ENCODE measurements at regions of chr11 and their contacts with region 1.

Region 1: GRCh38 chr11:34585735-34586487 is 35.0 kb upstream of the EHF start:
- DNase-seq: no peak
- ATAC-seq: peak; percentile 64
- H3K4me3 ChIP-seq: peak overlapping the region in 1 of 2 donors; percentile 32
- H3K27ac ChIP-seq: no peak overlapping the region
- H3K4me1 ChIP-seq: no peaks in the 10 kb centered on the region
- H3K27me3 ChIP-seq: peaks cover 0 to 3% of the 10 kb centered on the region in 2 donors

Region 2: DNA sequence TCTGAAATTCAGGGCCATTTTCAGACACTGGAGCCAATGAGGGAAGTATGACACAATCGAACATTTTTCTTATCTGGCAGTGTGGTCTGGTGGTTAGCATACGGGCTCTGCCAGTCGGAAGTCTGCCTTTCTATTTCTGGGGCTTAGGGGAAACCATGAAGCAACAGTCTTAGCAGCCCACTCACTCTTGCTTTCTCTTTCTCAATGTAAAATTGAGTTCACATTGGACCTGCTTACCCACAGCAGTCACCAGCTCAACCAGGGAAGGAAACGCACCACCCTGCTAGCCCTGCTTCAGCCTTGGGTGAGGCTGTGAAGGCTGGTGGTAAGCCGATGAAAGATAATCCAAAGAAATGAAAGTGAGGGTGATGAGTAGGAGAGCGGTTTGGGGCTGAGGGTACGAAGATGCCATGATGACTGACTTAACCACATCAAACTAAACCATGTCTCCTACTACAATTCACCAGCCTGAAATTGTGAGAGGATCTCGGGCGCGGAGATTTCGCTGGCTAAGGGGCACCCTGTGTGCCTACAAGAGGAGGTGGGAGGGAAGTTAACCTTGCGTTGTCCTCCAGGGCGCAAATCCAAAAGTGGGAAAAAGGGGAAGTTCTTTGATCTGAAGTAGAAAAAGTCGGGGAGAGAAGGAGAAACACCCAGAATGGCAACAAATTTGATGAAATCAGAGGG is 692.1 kb before region 1 on chr11:
- intact Hi-C with region 1: no loop called
- DNase-seq: no peak
- ATAC-seq: peak; percentile 34
- H3K4me3 ChIP-seq: no peak overlapping the region
- H3K27ac ChIP-seq: no peak overlapping the region
- H3K4me1 ChIP-seq: no peaks in the 10 kb centered on the region
- H3K27me3 ChIP-seq: no peaks in the 10 kb centered on the region

Region 3: GRCh38 chr11:34501500-34501899 is 84.4 kb before region 1 on chr11:
- intact Hi-C with region 1: no loop called
- DNase-seq: no peak
- ATAC-seq: peak; percentile 60
- H3K4me3 ChIP-seq: no peak overlapping the region
- H3K27ac ChIP-seq: no peak overlapping the region
- H3K4me1 ChIP-seq: no peaks in the 10 kb centered on the region
- H3K27me3 ChIP-seq: no peaks in the 10 kb centered on the region

Region 4: DNA sequence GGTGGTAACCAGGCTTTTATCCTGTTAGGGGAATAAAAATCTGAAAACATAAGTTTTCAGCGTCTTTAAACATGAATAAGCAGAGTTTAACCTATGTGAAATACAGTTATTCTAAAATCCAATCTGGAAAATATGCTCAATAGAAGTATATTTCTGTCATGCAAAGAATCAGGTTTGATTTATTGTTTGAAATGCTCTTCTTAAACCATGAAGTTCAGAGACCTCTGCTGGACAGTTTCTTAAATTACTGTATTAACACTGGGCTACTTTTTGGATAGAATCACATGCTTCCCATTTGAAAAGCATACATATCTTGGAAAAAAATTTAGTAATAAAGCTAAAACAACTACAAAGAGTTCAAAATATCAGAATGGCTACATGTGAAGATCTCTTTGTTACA is 304.9 kb after region 1 on chr11:
- intact Hi-C with region 1: loop called (anchors 2 to 10 kb)
- DNase-seq: no peak
- ATAC-seq: no peak
- H3K4me3 ChIP-seq: no peak overlapping the region
- H3K27ac ChIP-seq: no peak overlapping the region
- H3K4me1 ChIP-seq: no peaks in the 10 kb centered on the region
- H3K27me3 ChIP-seq: no peaks in the 10 kb centered on the region

Measured in aorta (tissue), 5 donors.